ENCODE measurements at regions of chr17 and their contacts with region 1.

Region 1: DNA sequence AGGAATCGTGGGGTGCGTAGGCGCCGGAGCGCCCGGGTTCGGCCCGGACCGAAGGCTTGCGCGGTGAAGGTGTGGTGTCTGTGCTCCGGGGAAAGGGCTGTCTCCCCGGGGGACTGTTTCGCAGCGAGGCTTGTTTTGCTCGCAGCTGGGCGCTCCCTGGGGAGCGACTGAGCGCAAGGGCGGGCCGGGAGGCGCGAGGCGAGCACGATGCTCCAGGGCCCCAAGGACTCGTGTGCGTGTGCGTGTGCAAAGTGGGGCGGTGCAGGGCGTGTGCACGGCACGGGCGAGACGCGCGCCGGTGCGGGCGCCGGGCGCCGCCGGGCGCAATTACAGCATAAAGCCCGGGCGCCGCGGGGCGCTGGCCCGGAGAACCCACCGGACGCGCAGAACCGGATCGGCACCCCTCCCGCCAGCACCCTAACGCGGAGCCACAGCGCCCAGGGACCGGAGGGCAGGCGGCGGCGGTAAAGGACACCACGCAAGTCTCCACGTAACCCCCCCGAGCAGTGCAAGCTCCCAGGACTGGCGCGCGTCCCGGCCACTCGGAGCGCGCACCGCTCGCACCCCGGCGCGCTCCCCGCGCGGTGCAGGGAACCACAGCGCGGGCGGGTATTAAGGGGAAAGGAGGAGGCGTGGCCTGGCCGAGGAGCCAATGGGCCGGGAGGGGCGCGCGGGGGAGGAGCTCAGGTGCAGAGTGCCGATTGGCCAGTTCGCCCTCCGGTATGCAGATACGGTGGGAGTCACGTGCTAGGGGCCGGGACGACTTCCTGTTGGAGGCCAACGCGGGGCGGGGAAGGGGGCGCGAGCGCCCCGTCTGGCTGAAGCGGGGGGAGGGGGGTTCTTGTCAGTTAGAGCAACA is at the start of gene TNRC6C:
- DNase-seq: peak; percentile 100
- H3K4me3 ChIP-seq: peak within 1 kb of the TSS; percentile 85
- H3K27ac ChIP-seq: peak within 1 kb of the TSS; percentile 42
- H3K4me1 ChIP-seq: peaks cover 33% of the 10 kb centered on the region
- CTCF ChIP-seq: peak; percentile 40; the same call in 1 of the 2 replicates
- total RNA-seq, gene TNRC6C: 8.5 and 14.2 TPM in 2 replicates

Region 2: GRCh38 chr17:77772461-77772897 is 185.6 kb before region 1 on chr17:
- CTCF ChIA-PET with region 1: no interaction called
- POLR2A ChIA-PET with region 1: no interaction called
- intact Hi-C with region 1: loop called (anchors 1 kb)
- DNase-seq: peak; percentile 73
- H3K4me3 ChIP-seq: no peak overlapping the region
- H3K27ac ChIP-seq: no peak overlapping the region
- H3K4me1 ChIP-seq: no peaks in the 10 kb centered on the region
- CTCF ChIP-seq: peak; percentile 97

Region 3: DNA sequence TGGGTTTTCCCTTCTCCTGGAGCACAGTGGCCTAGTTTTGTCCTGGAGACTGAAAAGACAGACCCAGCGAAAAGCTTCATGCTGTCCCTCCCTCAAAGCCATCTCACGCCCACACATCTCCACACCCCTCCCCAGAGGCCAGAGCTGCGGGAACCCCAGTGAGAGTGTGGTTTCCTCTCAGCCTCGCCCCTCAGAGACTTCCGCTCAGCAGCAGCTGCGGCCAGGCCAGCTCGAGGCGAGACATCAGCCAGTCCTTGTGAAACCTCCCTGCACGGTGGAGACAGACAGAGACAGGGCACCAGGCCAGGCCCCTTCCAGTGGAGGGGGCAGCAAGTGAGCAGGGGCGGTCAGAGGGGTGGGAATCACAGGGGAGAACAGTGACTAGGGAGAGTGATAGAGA is 76.5 kb before region 1 on chr17:
- CTCF ChIA-PET with region 1: no interaction called
- POLR2A ChIA-PET with region 1: interaction called, 12 read pairs
- intact Hi-C with region 1: loop called (anchors 5 kb)
- DNase-seq: peak; percentile 95
- H3K4me3 ChIP-seq: peak overlapping the region; percentile 49
- H3K27ac ChIP-seq: peak overlapping the region; percentile 59
- H3K4me1 ChIP-seq: peaks cover 53% of the 10 kb centered on the region
- CTCF ChIP-seq: no peak

Region 4: GRCh38 chr17:77974396-77974795 is 16.3 kb after region 1 on chr17:
- CTCF ChIA-PET with region 1: interaction called, 6 read pairs
- POLR2A ChIA-PET with region 1: interaction called, 22 read pairs
- intact Hi-C with region 1: no loop called
- DNase-seq: no peak
- H3K4me3 ChIP-seq: no peak overlapping the region
- H3K27ac ChIP-seq: no peak overlapping the region
- H3K4me1 ChIP-seq: no peaks in the 10 kb centered on the region
- CTCF ChIP-seq: no peak

Region 5: DNA sequence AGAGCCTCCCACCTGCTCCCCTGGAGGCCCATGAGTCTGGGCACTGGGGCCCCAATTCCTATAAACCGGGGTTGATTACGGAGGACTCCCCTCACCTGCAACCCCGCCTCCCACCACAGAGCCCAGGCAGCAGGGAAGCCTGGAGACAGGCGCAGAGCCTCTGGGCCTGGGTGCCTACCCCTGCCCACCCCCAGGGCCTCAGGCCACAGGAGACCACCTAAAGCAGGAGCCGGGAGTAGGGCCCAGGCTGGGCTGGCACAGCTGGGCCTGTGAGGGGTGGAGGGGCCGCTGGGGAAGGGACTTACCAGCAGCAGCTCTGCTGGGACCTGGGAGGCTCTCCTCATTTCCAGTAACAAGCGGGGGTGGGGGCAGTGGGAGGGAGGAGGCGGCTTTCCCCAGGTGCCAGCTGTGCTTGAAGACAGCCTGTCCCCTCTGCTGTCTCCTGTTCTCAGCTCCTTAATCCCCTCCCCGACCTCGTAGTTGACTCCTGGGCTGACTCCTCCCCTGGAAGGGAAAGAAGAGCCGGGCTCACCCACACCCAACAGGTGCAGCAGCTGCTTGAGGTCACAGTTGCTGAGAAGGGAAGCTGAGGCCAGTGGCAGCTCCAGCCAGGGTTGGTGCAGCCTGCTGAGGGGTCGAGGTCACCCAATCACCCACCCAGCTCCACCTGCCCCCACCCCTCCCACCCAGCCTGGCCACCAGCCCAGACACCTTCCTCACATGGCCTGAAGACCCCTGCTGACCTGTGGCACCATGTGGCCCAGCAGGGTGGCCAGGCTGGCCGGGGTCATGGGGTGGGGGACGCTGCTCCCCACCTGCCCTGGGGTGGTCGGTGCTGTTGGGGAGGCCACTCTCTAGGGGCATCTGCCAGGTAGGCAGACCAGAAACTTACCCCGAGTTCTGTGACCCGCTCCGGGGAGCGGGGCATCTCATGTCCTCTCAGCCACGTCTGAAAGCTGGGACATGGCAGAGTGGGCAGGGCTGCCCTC is 320.3 kb after region 1 on chr17:
- CTCF ChIA-PET with region 1: no interaction called
- POLR2A ChIA-PET with region 1: no interaction called
- intact Hi-C with region 1: no loop called
- DNase-seq: peak; percentile 68
- H3K4me3 ChIP-seq: no peak overlapping the region
- H3K27ac ChIP-seq: no peak overlapping the region
- H3K4me1 ChIP-seq: peaks cover 46% of the 10 kb centered on the region
- CTCF ChIP-seq: no peak